ENCODE measurements at regions of chrX and their contacts with region 1.

Region 1: GRCh38 chrX:47144626-47145394 is at the starts of genes NDUFB11 and RBM10:
- DNase-seq: peak; percentile 92
- H3K4me3 Mint-ChIP-seq: peak within 1 kb of the TSS; percentile 97
- H3K27ac Mint-ChIP-seq: peak within 1 kb of the TSS; percentile 99
- H3K4me1 Mint-ChIP-seq: peaks cover 37% of the 10 kb centered on the region
- H3K27me3 Mint-ChIP-seq: no peaks in the 10 kb centered on the region
- total RNA-seq, gene NDUFB11: 89.0 to 89.8 TPM
- total RNA-seq, gene RBM10: 55.3 to 57.0 TPM

Region 2: GRCh38 chrX:47129157-47129898 is 15.5 kb before region 1 on chrX:
- CTCF ChIA-PET with region 1: interaction called, 7 read pairs
- POLR2A ChIA-PET with region 1: interaction called, 55 read pairs
- DNase-seq: peak; percentile 91
- H3K4me3 Mint-ChIP-seq: peak overlapping the region; percentile 96
- H3K27ac Mint-ChIP-seq: peak overlapping the region; percentile 93
- H3K4me1 Mint-ChIP-seq: peaks cover 8% of the 10 kb centered on the region
- H3K27me3 Mint-ChIP-seq: no peaks in the 10 kb centered on the region

Region 3: GRCh38 chrX:47169726-47170515 is 25.1 kb after region 1 on chrX:
- CTCF ChIA-PET with region 1: no interaction called
- POLR2A ChIA-PET with region 1: no interaction called
- DNase-seq: no peak
- H3K4me3 Mint-ChIP-seq: no peak overlapping the region
- H3K27ac Mint-ChIP-seq: no peak overlapping the region
- H3K4me1 Mint-ChIP-seq: no peaks in the 10 kb centered on the region
- H3K27me3 Mint-ChIP-seq: no peaks in the 10 kb centered on the region

Region 4: DNA sequence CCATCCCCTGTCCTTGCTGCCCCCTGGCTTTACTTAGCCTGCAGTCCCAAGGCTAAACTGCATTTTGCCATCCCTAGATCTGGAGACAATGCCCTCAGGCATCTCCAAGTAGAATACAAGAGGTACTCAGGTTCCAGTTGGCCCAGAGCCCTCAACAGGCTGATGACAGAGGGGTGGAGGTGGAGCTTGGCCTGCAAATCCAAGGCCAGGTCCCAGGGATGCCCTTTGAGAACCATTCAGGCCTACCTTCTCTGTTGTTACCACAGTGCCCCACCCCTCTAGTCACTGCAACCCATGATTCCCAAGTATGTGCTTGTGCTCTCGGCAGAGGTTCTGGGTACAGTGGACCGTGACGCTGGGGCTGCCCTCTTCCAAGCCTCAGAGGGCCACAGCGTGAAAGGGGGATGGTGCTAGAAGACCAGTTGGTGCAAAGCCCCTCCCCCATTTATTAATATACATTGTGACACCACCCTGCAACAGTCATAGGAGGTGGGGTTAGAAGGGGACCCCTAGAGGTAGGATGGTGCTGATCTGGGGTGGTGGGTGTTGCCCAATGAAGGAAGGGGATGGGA is 42.4 kb after region 1 on chrX:
- CTCF ChIA-PET with region 1: interaction called, 8 read pairs
- POLR2A ChIA-PET with region 1: interaction called, 38 read pairs
- DNase-seq: no peak
- H3K4me3 Mint-ChIP-seq: no peak overlapping the region
- H3K27ac Mint-ChIP-seq: no peak overlapping the region
- H3K4me1 Mint-ChIP-seq: peaks cover 7% of the 10 kb centered on the region
- H3K27me3 Mint-ChIP-seq: no peaks in the 10 kb centered on the region

Region 5: GRCh38 chrX:47193475-47194193 is 48.8 kb after region 1 on chrX and contains the start of gene UBA1:
- CTCF ChIA-PET with region 1: interaction called, 8 read pairs
- POLR2A ChIA-PET with region 1: interaction called, 38 read pairs
- DNase-seq: peak; percentile 93
- H3K4me3 Mint-ChIP-seq: peak within 1 kb of the TSS; percentile 90
- H3K27ac Mint-ChIP-seq: peak within 1 kb of the TSS; percentile 93
- H3K4me1 Mint-ChIP-seq: peaks cover 50% of the 10 kb centered on the region
- H3K27me3 Mint-ChIP-seq: no peaks in the 10 kb centered on the region
- total RNA-seq, gene UBA1: 180 to 187 TPM

Region 6: DNA sequence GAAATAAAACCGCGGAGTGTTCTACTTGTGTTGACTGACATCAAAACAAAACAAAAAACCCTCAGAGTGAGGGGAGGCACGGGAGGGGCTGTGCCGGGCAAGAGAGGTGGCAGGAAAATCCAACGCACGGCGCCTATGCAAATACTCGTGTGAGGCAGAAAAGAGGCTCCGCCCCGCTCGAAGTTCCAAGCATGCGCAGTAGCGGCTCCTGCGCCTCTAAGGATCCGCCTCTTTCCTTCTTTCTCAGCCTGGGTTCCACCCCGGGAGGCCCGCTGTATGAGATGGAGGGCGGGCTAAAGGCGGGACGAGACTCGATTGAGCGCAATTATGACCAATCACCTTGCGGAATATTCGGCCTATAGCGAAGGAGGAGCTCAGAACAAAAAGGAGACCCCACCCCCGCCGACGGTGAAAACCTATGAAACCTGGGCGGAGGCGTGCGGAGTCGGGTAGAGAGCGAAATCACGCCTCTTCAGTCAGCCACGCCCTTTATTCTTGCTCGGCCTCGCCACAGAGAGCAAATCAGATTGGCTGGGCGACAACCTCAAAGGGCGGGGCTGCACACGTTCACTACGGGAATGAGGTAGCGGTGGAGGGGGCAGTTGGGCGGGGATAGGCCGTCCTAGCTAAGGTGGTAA is 73.0 kb after region 1 on chrX:
- CTCF ChIA-PET with region 1: interaction called, 3 read pairs
- POLR2A ChIA-PET with region 1: interaction called, 11 read pairs
- DNase-seq: peak; percentile 95
- H3K4me3 Mint-ChIP-seq: peak overlapping the region; percentile 85
- H3K27ac Mint-ChIP-seq: peak overlapping the region; percentile 97
- H3K4me1 Mint-ChIP-seq: peaks cover 43% of the 10 kb centered on the region
- H3K27me3 Mint-ChIP-seq: no peaks in the 10 kb centered on the region

Region 7: DNA sequence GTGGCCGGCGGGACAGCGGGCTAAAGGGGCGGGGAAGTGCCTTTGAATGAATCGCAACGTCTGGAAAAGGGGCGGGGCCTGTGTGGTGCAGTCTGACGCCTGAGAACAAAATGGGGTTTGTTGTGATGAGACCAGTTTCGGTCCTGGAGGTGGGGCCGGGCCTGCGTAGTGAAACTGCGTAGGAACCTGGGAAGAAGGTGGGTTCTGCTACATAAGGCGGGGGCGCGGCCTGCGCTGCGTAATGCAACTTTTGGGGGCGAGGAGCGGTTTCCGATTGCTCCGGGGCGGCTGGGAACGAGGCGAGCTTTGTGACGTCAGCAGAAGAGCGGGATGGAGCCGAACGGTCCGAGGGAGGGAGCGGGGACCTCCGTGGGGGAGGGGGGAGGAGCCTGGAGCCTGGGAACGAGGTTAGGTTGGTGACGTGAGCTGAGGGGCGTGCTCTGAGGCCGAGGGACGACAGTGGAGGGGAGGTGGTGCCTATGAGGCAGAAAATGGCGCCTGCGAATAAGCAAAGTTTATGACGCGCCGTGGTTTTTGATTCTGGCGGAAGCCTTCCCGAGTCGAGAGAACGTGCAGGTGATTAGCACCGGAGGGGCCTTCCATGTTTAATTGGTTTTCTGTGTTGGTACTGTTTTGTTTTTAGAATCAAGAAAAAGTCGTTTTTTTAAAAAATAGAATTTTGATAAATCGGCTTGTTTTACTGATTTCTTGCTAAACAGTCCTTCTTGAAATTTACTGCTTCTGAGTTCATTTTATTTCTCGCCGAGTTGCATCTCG is 88.7 kb after region 1 on chrX:
- CTCF ChIA-PET with region 1: interaction called, 3 read pairs
- POLR2A ChIA-PET with region 1: interaction called, 12 read pairs
- DNase-seq: peak; percentile 93
- H3K4me3 Mint-ChIP-seq: peak overlapping the region; percentile 84
- H3K27ac Mint-ChIP-seq: peak overlapping the region; percentile 98
- H3K4me1 Mint-ChIP-seq: peaks cover 12% of the 10 kb centered on the region
- H3K27me3 Mint-ChIP-seq: no peaks in the 10 kb centered on the region

Measured in activated CD4-positive, alpha-beta memory T cell treated with anti-CD3 and anti-CD28 coated beads, Interleukin-2, amount 10 ng/mL, durations not matched to agents 7 days and 5 days (primary cell).